ENCODE measurements at regions of chr15 and their contacts with region 1.

Region 1: DNA sequence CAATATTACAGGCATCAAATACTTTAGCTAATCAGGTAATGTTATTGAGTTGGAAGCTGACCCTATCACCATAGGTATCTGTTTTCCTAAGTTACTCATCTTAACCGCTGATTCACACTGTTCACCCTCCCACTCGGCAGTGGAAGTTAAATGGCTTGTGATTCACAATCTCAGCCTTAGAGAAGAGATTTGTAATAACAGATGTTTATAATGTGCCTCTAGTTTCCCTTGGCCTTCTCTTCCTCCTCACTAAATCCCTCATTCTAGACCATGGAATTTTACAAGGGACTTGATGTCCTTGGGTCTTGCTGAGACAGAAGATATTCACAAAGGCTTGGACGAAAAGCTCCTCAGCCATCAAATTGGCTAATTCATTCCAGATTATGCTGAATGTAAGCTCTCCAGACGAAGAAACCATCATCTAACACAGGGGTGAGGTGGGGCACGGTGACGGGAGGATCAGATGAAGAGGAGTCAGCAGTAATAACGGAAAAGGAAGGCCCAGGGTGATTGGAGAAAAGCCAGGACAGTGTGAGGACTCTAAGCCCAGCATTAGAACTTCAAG is 931.7 kb downstream of the MCTP2 start:
- H3K4me3 Mint-ChIP-seq: no peak overlapping the region
- H3K27ac Mint-ChIP-seq: no peak overlapping the region
- H3K4me1 Mint-ChIP-seq: no peaks in the 10 kb centered on the region
- H3K27me3 Mint-ChIP-seq: no peaks in the 10 kb centered on the region

Region 2: DNA sequence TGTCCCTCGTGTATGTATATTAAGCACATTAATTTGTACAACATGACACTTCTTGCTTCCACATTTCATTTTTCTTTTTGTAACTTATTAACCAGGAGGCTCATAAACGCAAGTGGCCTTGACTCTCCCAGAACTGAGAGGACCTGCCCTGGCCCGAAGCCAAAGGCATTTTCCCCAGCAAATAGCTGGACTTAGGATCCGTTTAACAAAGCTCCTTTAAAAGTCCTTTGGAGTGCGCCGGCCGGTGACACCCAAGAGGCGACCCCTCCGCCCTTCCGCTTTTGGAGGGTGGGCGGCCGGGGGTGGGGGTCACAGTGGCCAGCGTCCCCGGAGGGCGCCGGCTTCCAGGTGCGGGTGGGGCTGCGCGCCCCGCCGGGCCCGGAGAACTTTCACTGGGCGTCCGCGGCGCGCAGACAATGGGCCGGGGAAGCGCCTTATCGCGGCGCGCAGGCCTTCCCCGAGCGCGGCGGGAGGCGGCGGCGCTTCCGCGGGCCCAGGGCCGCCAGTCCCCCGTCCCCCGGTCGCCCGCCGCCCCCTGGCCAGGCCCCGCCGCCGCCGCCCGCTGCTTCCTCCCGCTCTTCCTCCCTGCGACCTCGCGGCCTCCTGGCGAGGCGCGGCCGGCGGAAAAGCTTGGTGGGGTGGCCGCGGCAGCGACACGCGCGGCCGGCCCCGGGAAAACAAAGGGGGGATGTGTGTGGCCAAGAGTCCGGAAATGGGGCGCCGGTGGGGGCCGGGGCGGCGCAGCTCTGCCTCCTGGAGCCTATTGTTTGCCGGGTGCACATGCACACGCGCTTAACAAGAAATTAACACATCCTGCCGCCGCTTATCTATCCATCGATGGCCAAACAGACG is 318.3 kb before region 1 on chr15:
- intact Hi-C with region 1: loop called (anchors 5 kb)
- H3K4me3 Mint-ChIP-seq: no peak overlapping the region
- H3K27ac Mint-ChIP-seq: no peak overlapping the region
- H3K4me1 Mint-ChIP-seq: no peaks in the 10 kb centered on the region
- H3K27me3 Mint-ChIP-seq: peaks cover 32% of the 10 kb centered on the region

Region 3: DNA sequence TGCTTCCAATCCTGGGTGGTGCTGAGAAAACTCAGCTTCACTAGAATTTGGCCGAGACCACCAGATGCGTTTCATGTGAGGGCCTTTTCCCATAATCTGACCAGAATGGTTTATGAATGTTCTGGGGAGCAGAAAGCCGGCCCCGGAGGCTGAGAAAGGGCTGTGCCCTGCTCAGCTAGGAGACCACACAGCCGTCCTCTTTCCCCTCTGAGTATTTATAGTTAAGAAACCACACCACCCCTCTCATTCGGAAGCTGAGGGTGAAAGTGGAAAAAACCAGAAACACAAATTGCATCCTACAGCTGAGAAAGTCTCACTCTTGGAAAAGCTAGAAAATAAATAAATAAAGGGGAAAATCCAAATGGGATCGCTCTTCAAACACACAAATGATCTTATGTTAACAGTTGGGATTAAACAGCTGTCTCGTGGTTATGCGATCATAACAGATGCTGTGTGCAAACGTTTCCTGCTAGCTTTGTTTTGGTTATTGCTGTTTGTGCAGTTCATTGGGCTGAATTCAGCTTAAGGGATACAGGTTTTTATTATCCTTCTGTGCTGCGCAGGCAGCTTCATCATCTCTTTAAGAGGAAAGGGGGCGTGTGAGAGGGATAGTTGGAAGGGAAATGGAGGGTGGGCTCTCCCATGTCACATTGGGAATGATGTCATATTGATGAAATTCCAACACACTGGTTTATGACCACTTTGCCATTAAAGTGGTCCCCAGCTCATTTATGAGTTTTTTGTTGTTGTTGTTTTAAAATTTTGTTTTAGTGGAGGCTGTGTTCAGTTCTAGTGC is 141.3 kb after region 1 on chr15:
- intact Hi-C with region 1: no loop called
- H3K4me3 Mint-ChIP-seq: no peak overlapping the region
- H3K27ac Mint-ChIP-seq: no peak overlapping the region
- H3K4me1 Mint-ChIP-seq: no peaks in the 10 kb centered on the region
- H3K27me3 Mint-ChIP-seq: no peaks in the 10 kb centered on the region